A673 (cell line): ENCODE measurements at regions of chr3 and their contacts with region 1.

Region 1: GRCh38 chr3:30779686-30780287 is 114.7 kb downstream of the GADL1 start:
- DNase-seq: peak; percentile 81
- H3K4me3 ChIP-seq: no peak overlapping the region
- H3K27ac ChIP-seq: no peak overlapping the region
- H3K4me1 ChIP-seq: peaks cover 23% of the 10 kb centered on the region
- H3K27me3 ChIP-seq: no peaks in the 10 kb centered on the region
- CTCF ChIP-seq: peak; percentile 64

Region 2: DNA sequence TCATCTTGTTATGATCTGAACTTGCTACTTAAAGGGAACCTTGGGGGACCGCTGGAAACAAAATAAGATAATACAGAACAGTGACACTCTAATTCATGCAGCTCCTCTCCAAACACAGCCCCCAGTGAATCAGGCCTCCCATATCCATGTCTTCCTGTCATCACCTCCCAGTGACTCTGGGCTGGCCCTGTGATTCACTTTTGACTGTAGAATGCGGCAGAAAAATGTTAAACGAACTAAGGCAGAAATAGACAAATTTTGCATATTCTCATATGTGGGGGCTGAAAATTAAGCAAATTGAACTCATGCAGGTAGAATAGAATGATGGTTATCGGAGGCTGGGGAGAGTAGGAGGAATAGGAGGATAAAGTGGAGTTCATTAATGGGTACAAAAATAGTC is 134.9 kb after region 1 on chr3:
- CTCF ChIA-PET with region 1: no interaction called
- POLR2A ChIA-PET with region 1: no interaction called
- intact Hi-C with region 1: loop called (anchors 5 kb)
- DNase-seq: no peak
- H3K4me3 ChIP-seq: no peak overlapping the region
- H3K27ac ChIP-seq: no peak overlapping the region
- H3K4me1 ChIP-seq: peaks cover 8% of the 10 kb centered on the region
- H3K27me3 ChIP-seq: no peaks in the 10 kb centered on the region
- CTCF ChIP-seq: no peak

Region 3: GRCh38 chr3:31432897-31433678 is 653.3 kb after region 1 on chr3:
- CTCF ChIA-PET with region 1: no interaction called
- POLR2A ChIA-PET with region 1: no interaction called
- intact Hi-C with region 1: loop called (anchors 10 kb)
- DNase-seq: no peak
- H3K4me3 ChIP-seq: no peak overlapping the region
- H3K27ac ChIP-seq: no peak overlapping the region
- H3K4me1 ChIP-seq: no peaks in the 10 kb centered on the region
- H3K27me3 ChIP-seq: no peaks in the 10 kb centered on the region
- CTCF ChIP-seq: no peak

Region 4: DNA sequence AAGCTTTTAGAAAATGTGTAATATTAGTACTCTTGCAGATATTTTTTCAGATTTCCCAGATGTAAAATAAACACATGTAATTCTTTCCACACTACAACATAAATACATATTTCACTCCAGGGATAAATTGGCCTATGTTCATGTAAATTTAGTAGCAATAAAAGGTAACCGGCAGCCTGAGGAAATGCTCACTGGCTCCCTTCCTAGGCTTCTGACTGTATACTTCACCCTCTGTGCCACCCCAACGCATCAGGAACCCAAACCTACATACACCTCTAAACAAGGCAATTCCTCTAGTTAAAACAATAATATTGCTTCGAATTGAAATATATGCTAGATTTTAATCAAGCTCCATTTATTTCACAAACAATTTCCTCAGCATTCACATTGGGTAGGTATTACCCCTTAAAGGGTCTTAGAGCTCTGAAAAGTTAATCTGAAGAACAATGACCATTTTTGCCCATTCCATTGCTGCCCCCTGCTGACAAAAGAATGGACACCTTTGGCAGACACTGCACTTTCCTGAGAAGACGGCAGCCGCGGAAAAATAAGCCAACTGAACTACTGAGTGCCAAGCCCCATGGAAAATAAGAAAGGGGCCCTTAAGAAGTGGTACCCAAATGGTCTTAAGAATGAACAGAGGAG is 988.8 kb after region 1 on chr3:
- CTCF ChIA-PET with region 1: no interaction called
- POLR2A ChIA-PET with region 1: no interaction called
- intact Hi-C with region 1: loop called (anchors 10 kb)
- DNase-seq: peak; percentile 63
- H3K4me3 ChIP-seq: no peak overlapping the region
- H3K27ac ChIP-seq: no peak overlapping the region
- H3K4me1 ChIP-seq: no peaks in the 10 kb centered on the region
- H3K27me3 ChIP-seq: no peaks in the 10 kb centered on the region
- CTCF ChIP-seq: peak; percentile 44